MCF 10A (cell line): ENCODE measurements at regions of chr22 and their contacts with region 1.

Region 1: DNA sequence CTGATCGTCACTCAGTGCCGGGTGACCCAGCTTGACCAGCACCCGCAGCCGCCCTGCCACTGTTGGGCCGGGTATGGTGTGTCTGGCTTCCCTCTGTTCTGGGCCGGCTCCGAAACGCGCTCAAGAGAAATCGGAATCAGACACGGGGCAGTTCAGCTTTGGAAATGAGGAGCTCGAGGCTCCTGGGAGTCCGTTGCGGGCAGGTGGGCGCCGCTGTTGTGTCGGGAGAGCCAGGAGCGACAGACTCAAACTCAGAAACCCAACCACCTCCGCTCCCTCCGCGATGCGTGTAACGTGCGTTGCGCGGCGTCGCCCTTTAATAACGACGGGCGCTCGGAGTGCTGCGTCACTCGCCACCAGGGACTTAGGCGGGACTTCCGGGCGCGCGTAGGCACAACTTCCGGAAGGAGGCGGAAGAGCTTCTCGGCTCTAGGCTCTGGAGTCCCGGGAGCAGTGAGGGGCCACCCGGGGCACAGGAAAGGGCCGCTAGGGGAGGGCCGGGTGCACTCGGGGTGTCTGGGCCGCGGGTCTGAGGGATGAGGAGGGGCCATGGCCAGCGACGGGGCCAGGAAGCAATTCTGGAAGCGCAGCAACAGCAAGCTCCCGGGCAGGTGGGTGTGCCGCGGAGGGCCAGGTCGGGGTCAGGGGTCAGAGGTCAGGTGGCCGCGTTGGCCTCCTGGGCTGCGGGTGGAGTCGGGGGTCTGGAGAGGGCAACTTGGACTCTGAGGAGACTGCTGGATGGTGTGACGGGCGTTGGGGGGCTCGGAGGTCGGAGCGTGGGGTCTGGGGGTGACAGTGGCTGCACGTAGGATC is at the start of gene TBC1D22A:
- DNase-seq: peak; percentile 93
- H3K4me3 Mint-ChIP-seq: peak within 1 kb of the TSS; percentile 99
- H3K27ac Mint-ChIP-seq: peak within 1 kb of the TSS; percentile 100
- H3K4me1 Mint-ChIP-seq: peaks cover 29% of the 10 kb centered on the region
- H3K27me3 Mint-ChIP-seq: no peaks in the 10 kb centered on the region
- CTCF ChIP-seq: no peak
- total RNA-seq, gene TBC1D22A: 26.0 and 27.7 TPM in 2 replicates

Region 2: DNA sequence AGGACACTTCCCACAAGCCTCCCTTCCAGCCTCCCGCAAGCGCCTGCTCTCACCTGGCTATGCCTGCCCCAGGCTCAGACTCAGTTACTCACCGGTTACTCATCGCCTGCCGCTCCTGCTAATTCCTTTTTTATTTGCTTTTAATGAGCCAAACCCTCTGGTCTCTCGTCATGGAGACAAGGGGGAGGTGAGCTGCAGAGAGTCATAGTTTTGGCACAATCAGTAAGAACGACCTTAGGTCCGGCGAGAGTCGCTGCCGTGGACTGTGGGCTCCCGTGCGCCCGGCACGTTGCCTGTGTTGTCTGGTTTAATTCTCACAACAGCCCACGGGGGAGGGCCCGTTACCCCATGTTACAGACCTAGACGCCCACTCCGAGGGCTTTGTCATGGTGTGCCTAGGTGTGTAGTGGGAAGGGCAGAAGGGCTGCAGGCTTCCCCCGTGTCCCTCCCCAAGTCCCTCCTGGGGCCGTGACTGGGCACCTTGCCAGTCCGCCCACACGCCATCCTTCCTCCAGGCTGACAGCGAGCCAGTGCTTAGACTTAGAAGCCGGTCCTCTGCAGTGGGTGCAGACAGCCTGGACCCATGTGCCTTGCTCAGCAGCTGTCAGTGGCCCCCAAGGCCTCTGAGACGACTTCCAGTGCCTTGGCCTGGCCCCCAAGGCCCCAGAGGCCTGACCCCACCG is 827.6 kb before region 1 on chr22:
- CTCF ChIA-PET with region 1: no interaction called
- POLR2A ChIA-PET with region 1: no interaction called
- intact Hi-C with region 1: no loop called
- DNase-seq: peak; percentile 98
- H3K4me3 Mint-ChIP-seq: peak overlapping the region; percentile 66
- H3K27ac Mint-ChIP-seq: peak overlapping the region; percentile 83
- H3K4me1 Mint-ChIP-seq: peaks cover 24% of the 10 kb centered on the region
- H3K27me3 Mint-ChIP-seq: no peaks in the 10 kb centered on the region
- CTCF ChIP-seq: no peak

Region 3: DNA sequence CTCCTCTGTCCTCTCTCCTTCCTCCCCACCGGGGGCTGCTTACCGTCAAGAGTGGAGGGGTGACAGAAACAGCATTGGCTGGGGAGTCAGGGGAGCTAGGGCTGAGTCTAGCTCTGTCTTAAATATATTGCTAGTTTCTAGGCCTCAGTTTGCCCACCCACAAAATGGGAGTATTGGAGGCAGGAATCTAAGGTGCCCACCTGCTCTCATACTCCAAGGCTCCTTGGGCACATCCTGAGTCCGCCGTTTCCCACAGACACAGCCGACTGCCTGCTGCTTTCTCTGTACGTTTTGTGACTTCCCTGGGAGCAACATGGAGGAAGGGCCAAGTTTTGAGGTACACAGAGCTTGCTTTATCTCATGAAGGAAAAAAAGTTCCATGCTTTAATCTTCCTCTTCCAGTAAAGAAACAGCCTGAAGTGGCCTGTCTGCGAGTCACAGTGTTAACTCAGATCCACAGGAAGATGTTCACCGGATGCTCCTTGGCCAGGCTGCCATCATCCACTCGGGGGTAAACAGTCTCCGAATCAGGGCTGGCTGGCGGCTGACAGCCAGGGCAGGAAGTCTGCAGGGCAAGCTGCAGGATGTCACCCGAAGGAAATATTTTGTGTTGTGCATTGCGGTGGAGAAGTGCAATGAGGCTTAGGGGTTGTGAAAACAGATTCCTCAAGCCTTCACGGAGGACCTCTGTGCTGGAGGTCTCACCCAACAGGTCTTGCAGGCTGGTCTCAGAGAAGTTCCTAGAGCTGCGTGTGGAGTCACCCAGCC is 13.4 kb before region 1 on chr22:
- CTCF ChIA-PET with region 1: interaction called, 11 read pairs
- POLR2A ChIA-PET with region 1: interaction called, 43 read pairs
- intact Hi-C with region 1: no loop called
- DNase-seq: no peak
- H3K4me3 Mint-ChIP-seq: no peak overlapping the region
- H3K27ac Mint-ChIP-seq: no peak overlapping the region
- H3K4me1 Mint-ChIP-seq: peaks cover 3% of the 10 kb centered on the region
- H3K27me3 Mint-ChIP-seq: peaks cover 10% of the 10 kb centered on the region
- CTCF ChIP-seq: no peak

Region 4: DNA sequence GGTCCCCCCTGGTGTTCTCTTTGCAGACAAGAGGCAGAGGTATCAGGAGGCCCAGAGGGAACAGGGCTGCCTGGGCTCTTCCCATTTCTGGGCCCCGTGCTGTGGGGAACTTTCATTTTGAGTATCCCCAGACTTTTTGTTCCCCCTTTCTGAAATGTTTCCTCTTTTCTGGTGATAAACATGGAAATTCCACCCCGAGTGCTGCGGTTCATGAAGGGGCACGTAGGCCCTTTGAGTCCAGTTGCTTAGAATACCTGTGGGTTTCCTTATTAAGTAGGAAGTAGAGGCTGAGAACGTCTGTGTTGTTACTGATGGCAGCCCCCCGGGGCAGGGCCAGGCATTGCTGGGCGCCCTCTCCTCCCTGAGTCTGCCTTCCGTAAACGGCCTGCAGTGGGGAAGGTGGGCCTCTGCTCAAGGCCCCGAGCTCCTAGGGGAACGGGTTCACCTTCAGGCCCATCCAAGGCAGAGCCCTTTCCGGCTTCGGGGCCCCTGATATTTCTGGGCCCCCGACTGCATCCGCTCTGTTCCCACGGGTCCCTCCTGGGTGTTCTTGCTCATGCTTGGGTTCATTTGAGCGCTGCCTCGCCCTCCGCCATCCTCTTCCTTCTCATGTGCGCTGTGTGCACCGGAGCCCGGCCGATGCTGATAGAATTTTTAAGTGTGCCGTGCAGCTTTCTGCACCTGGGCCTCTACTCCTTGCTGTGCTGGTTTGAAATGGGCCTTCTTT is 12.0 kb after region 1 on chr22:
- CTCF ChIA-PET with region 1: interaction called, 41 read pairs
- POLR2A ChIA-PET with region 1: interaction called, 109 read pairs
- intact Hi-C with region 1: no loop called
- DNase-seq: no peak
- H3K4me3 Mint-ChIP-seq: peak overlapping the region; percentile 59
- H3K27ac Mint-ChIP-seq: peak overlapping the region; percentile 85
- H3K4me1 Mint-ChIP-seq: peaks cover 34% of the 10 kb centered on the region
- H3K27me3 Mint-ChIP-seq: no peaks in the 10 kb centered on the region
- CTCF ChIP-seq: no peak

Region 5: DNA sequence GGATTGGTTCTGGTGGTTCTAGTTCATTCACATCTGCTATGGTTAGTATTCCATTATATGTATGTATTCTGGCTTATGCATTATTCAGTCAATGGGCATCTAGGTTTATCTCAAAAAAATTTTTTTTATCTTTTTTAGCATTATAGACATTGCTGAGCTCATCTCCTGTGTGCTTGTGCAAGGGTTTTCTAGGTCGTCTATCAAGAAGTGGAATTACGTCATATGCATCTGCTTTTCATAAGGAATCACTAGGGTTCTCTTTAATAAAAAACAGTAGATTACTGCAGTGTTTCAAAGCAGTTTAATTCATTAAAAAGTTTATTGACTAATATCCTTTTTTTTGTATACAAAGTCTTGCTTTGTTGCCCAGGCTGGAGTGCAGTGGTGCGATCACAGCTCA is 21.3 kb after region 1 on chr22:
- CTCF ChIA-PET with region 1: interaction called, 13 read pairs
- POLR2A ChIA-PET with region 1: interaction called, 6 read pairs
- intact Hi-C with region 1: no loop called
- DNase-seq: no peak
- H3K4me3 Mint-ChIP-seq: no peak overlapping the region
- H3K27ac Mint-ChIP-seq: no peak overlapping the region
- H3K4me1 Mint-ChIP-seq: no peaks in the 10 kb centered on the region
- H3K27me3 Mint-ChIP-seq: no peaks in the 10 kb centered on the region
- CTCF ChIP-seq: no peak